A549 (cell line): ENCODE measurements at regions of chr5 and their contacts with region 1.

Region 1: GRCh38 chr5:34735491-34736363 is 79.6 kb downstream of the RAI14 start:
- DNase-seq: no peak
- ATAC-seq: no peak
- H3K4me3 ChIP-seq: no peak overlapping the region
- H3K27ac ChIP-seq: peak overlapping the region in 1 of 2 experiments; percentile 52; a peak in 3 of 6 replicates
- H3K4me1 ChIP-seq: peaks cover 43% of the 10 kb centered on the region
- CTCF ChIP-seq: no peak
- EP300 ChIP-seq: no peak
- POLR2A ChIP-seq: no peak
- RAD21 ChIP-seq: no peak

Region 2: DNA sequence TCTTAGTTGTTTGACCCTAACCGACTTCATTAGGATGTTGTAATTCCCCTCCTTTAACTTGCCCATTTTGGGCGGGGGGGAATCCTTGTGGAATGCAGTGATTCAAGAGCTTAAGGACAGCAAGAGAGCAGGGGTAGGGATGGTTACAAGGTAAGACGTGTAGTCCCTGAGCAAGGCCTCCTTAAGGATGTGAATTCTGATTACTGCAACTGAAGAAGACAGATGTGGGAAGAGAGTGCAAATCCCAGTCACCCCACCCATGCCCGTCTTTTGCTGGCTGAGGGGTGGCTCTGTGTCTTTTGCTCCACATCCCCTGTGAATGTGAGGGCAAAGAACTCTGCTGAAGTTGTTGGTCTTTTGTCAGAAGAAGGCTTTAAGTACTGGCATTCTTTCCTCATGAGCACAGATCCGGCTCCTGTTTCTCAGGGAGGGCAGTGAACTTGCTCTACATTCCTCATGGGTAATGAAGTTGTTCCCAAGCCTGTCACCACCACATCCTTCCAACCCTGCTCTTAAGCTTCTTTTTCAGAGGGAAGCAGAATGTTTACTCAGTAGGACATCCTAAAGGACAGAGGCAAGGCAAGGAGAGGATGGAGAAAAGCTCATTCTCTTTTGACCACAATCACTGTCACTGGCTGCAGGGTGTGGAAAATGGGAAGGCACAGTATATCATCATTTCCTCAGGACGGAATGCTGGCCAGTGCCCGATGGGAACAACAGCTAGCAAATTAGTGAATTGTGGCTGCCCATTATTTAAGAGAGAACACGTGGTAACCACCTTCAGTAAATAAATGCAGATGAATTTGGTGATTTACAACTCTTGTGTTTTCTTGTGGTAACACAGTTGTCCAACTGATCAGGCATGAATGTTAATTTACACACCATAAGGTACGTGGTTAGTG is 18.1 kb before region 1 on chr5:
- CTCF ChIA-PET with region 1: interaction called, 10 read pairs
- POLR2A ChIA-PET with region 1: no interaction called
- DNase-seq: peak in 1 of 2 experiments; percentile 47
- ATAC-seq: peak in 1 of 2 experiments; percentile 68; a peak in 3 of 6 replicates
- H3K4me3 ChIP-seq: no peak overlapping the region
- H3K27ac ChIP-seq: peak overlapping the region in 1 of 2 experiments; percentile 52; a peak in 2 of 6 replicates
- H3K4me1 ChIP-seq: peaks cover 32% of the 10 kb centered on the region
- CTCF ChIP-seq: no peak
- EP300 ChIP-seq: no peak
- POLR2A ChIP-seq: no peak
- RAD21 ChIP-seq: no peak